Sigmoid colon (tissue), 7 donors: ENCODE measurements at regions of chr2 and their contacts with region 1.

Region 1: GRCh38 chr2:119407430-119408220 is 24.0 kb upstream of the TMEM37 start:
- DNase-seq: no peak
- H3K4me3 ChIP-seq: no peak overlapping the region
- H3K27ac ChIP-seq: no peak overlapping the region
- H3K4me1 ChIP-seq: no peaks in the 10 kb centered on the region
- H3K27me3 ChIP-seq: peaks cover 0 to 4% (median 0%) of the 10 kb centered on the region in 3 donors
- CTCF ChIP-seq: peak; percentile 68 to 78 (median 72)
- EP300 ChIP-seq: no peak
- POLR2A ChIP-seq: no peak

Region 2: GRCh38 chr2:119476301-119477021 is 68.8 kb after region 1 on chr2:
- intact Hi-C with region 1: loop called (anchors 1 kb)
- DNase-seq: peak; percentile 71
- H3K4me3 ChIP-seq: no peak overlapping the region
- H3K27ac ChIP-seq: no peak overlapping the region
- H3K4me1 ChIP-seq: peaks cover 0 to 5% (median 0%) of the 10 kb centered on the region in 4 donors
- H3K27me3 ChIP-seq: peaks cover 0 to 9% (median 0%) of the 10 kb centered on the region in 3 donors
- CTCF ChIP-seq: peak in 3 of 4 experiments; percentile 71 to 92 (median 81)
- EP300 ChIP-seq: no peak
- POLR2A ChIP-seq: no peak

Region 3: DNA sequence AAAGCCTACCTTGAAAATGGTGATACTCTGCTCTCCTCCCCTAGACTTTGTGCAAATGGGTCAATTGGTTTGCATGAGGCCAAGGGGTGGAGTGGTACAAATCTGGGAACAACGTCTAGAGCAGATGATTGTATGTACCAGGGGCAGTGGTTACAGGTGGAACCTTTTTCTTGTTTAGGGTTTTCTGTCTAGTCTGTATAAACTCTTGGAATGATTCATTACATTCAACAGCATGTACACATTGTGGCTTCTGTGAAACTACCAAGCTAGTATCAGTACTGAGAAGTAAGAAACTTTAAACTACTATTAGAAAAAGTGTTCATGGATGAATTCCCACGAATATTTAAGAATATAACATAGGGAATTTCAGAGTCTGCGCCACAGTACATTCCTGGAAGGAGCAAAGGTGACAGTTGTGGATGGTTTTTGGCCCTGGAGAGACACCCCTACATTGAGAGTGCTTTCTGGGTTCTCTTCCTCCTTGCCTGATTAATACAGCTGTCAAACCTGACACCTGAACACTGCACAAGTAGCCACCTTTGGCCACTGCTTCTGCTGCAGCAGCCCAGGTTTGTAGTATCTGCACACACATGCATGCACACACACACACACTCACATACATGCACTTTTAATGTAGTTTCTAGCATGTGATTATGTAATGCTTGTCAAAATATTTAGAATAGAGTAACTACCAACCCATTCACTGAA is 166.6 kb after region 1 on chr2:
- intact Hi-C with region 1: no loop called
- DNase-seq: no peak
- H3K4me3 ChIP-seq: no peak overlapping the region
- H3K27ac ChIP-seq: no peak overlapping the region
- H3K4me1 ChIP-seq: peaks cover 0 to 22% (median 7%) of the 10 kb centered on the region in 4 donors
- H3K27me3 ChIP-seq: no peaks in the 10 kb centered on the region
- CTCF ChIP-seq: no peak
- EP300 ChIP-seq: no peak
- POLR2A ChIP-seq: no peak

Region 4: DNA sequence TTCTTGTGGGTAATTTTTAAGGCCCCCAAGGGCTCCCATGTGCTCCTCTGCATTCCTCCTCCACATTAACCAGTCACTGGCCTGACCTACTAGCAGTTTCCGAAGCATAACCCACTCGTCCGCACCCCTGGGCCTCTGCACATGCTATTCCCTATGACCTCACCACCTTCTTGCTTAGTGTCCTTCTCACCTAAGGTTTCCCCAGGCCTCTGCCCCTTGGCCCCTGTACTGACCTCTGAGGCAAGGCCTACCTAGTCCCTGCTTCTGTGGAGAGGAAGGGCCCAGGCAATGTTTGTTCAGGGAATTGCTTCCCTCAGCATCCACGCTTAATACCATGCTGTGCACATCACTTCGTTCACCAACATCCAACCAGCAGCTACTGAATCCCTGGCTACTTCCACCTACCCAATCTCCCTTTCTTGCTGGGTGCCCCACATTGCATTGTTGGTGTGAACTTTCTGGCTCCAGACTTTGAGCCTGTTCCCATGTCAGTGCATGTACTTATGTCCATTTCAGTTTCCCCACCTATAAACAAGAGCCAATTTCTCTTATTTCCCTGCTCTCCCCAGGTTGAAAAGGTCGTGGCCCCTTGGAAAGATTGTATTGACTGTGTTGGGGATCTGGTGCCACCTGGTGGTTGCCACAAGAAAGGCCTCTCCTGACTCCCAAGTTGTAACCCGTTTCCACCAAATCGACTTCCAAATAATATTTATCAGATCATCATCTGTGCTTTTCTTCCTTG is 252.1 kb after region 1 on chr2:
- intact Hi-C with region 1: loop called (anchors 10 kb)
- DNase-seq: no peak
- H3K4me3 ChIP-seq: no peak overlapping the region
- H3K27ac ChIP-seq: no peak overlapping the region
- H3K4me1 ChIP-seq: no peaks in the 10 kb centered on the region
- H3K27me3 ChIP-seq: peaks cover 0 to 3% (median 0%) of the 10 kb centered on the region in 3 donors
- CTCF ChIP-seq: peak; percentile 10 to 85 (median 66)
- EP300 ChIP-seq: no peak
- POLR2A ChIP-seq: no peak

Region 5: GRCh38 chr2:120605231-120605935 is 1197.8 kb after region 1 on chr2:
- intact Hi-C with region 1: no loop called
- DNase-seq: no peak
- H3K4me3 ChIP-seq: no peak overlapping the region
- H3K27ac ChIP-seq: no peak overlapping the region
- H3K4me1 ChIP-seq: no peaks in the 10 kb centered on the region
- H3K27me3 ChIP-seq: no peaks in the 10 kb centered on the region
- CTCF ChIP-seq: no peak
- EP300 ChIP-seq: no peak
- POLR2A ChIP-seq: no peak